Transverse colon (tissue), 4 donors: ENCODE measurements at regions of chr12 and their contacts with region 1.

Region 1: DNA sequence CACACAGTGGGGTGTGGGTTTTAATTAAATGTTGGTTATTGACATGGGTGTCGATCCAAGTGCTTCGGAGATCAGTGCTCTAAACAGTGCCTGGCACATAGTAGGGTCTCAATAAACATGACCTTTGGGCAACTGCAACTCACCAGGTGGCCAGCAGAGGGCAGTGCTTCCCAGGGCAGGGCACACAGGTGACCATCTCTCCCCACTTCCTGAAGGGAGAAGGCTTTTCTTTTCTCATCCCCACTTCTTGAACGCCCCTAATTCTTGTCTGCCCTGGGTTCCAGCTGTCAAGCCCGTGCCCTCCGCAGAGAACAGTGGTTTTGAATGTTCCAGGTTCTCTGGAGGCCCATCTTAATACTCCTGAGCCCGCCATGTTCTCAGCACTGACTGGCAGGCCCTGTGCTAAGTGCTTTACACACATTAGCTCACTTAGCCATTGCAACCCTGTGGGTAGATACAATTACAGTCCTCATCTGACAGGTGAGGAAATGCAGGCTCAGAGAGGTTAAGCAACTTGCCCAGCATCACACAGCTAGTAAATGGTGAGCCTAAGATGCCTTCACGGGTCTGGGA is 16.3 kb downstream of the RAPGEF3 start:
- DNase-seq: peak; percentile 79
- H3K4me3 ChIP-seq: no peak overlapping the region
- H3K27ac ChIP-seq: peak overlapping the region in 1 of 4 donors; percentile 35
- H3K4me1 ChIP-seq: peaks cover under 1 to 34% (median 16%) of the 10 kb centered on the region in 4 donors
- H3K27me3 ChIP-seq: no peaks in the 10 kb centered on the region
- CTCF ChIP-seq: peak; percentile 97 to 99 (median 98)
- EP300 ChIP-seq: no peak
- POLR2A ChIP-seq: no peak

Region 2: DNA sequence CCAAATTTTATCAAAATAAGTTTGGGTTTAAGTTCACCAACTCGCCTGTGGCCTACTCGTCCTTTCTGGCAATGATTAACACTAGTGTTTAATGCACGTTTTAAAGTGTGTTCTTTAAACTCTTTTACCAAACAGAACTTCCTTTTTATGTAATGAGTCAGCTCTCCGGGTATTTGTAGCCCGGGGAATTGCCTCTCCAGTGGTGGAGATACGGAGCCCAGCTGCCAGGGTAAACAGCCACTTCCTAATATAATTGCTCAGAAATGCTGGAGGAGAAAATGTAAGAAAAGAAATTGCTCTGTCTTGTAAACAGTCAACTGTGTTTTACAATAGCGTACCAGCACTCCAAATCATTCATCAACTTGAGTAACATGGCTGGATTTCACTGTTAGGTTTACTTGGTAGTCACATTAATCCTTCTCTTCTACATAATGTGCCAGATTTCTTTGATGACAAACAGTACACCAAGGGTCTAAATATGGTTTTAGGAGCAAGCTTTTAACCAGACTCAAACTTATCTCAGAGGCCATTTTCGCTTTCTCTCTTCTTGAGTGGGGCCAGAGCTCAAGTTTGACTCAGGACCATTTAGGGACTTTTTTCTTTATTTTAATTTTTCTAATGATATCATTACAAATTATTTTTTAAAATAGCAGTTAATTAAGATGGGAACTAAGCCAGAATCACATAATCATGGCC is 1268.6 kb before region 1 on chr12:
- in situ Hi-C with region 1: no loop called
- intact Hi-C with region 1: no loop called
- DNase-seq: peak; percentile 75
- H3K4me3 ChIP-seq: peak overlapping the region in 1 of 4 donors; percentile 16
- H3K27ac ChIP-seq: peak overlapping the region; percentile 77 to 84 (median 81)
- H3K4me1 ChIP-seq: peaks cover 11 to 31% (median 23%) of the 10 kb centered on the region in 4 donors
- H3K27me3 ChIP-seq: no peaks in the 10 kb centered on the region
- CTCF ChIP-seq: peak in 1 of 5 experiments; percentile 20
- EP300 ChIP-seq: no peak
- POLR2A ChIP-seq: no peak

Region 3: GRCh38 chr12:47963340-47964040 is 221.2 kb after region 1 on chr12 and contains the start of gene TMEM106C:
- in situ Hi-C with region 1: loop called in 1 of 4 experiments (anchors 25 kb)
- intact Hi-C with region 1: no loop called
- DNase-seq: peak; percentile 94
- H3K4me3 ChIP-seq: peak within 1 kb of the TSS; percentile 70 to 100 (median 82)
- H3K27ac ChIP-seq: peak within 1 kb of the TSS; percentile 80 to 87 (median 86)
- H3K4me1 ChIP-seq: peaks cover 15 to 29% (median 20%) of the 10 kb centered on the region in 4 donors
- H3K27me3 ChIP-seq: no peaks in the 10 kb centered on the region
- CTCF ChIP-seq: peak; percentile 96 to 98 (median 97)
- EP300 ChIP-seq: no peak
- POLR2A ChIP-seq: peak; percentile 72
- total RNA-seq, gene TMEM106C: 51.9 to 258 (median 113) TPM